Activated T-helper 1 cell treated with anti-CD3 and anti-CD28 coated beads, Interleukin-12 subunit alpha, Interleukin-12 subunit beta, Interleukin-2, Interleukin-4 antibody, amounts not matched to agents 30 ng/mL and 10 ng/mL and 1 ng/mL, durations not matched to agents 14 hours and 24 hours and 36 hours (primary cell): ENCODE measurements at regions of chr20 and their contacts with region 1.

Region 1: GRCh38 chr20:50749758-50750046 is 18.3 kb downstream of the PARD6B start:
- DNase-seq: no peak
- H3K4me3 Mint-ChIP-seq: no peak overlapping the region
- H3K27ac Mint-ChIP-seq: no peak overlapping the region
- H3K4me1 Mint-ChIP-seq: peaks cover 26% of the 10 kb centered on the region
- H3K27me3 Mint-ChIP-seq: no peaks in the 10 kb centered on the region

Region 2: DNA sequence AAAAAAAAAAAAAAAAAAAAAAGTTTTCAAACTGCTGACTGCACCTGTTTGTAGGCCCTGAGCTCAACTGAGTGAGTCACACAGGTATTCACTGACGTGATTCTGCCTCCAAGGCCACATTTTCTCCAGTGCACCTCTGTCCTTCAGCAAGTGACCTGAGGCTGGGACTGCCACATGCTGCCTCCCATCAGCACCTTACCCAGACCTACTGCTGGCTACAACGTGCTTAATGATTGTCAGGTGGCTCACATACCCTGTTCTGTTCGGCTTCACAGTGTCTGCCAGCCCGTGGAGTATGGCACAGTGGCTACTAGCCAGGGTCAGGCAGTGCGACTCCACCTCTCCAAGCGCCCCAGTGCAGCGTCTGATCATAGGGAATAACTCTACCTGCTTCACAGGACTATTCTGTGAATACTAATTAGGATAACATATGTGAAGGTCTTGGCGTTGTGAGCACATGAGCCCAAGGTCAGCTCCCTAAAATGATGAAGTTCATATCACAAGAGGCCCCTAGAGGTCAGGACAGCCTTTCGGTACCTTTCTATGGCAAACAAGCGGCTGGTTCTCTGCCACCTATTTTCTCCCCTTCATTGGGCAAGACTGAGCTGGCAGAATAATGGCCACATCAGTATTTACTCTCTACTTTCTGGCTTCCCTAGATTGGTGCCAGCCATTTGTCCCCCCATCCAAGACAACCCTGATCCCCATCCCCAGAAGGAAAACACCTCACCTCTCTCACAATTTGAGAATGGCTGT is 86.4 kb before region 1 on chr20:
- intact Hi-C with region 1: loop called (anchors 1 kb)
- DNase-seq: no peak
- H3K4me3 Mint-ChIP-seq: no peak overlapping the region
- H3K27ac Mint-ChIP-seq: no peak overlapping the region
- H3K4me1 Mint-ChIP-seq: no peaks in the 10 kb centered on the region
- H3K27me3 Mint-ChIP-seq: peaks cover 5% of the 10 kb centered on the region

Region 3: DNA sequence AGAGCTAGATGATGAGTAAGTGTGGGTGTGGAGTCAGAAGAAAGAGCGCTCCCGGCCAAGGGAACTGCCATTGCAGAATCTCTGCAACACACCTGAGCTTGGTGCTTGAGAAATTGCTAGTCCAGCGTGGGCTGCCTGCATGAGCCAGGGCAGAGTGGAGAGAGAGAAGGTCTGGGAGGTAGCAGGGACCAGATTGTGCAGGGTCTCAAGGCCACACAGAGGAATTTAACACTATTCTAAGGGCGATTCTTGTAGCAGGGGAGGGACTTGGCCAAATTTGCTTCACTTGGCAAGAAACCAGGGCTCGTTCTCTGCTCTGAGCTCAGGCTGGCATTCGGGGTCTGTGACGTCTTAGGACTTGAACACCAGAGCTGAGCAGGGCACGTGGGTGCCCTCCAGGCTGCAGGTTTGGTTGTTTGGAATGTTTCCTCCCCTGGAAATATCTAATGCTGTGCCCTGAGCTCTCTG is 98.7 kb after region 1 on chr20:
- intact Hi-C with region 1: no loop called
- DNase-seq: no peak
- H3K4me3 Mint-ChIP-seq: no peak overlapping the region
- H3K27ac Mint-ChIP-seq: peak overlapping the region; percentile 44
- H3K4me1 Mint-ChIP-seq: peaks cover 10% of the 10 kb centered on the region
- H3K27me3 Mint-ChIP-seq: no peaks in the 10 kb centered on the region